Cardiac septum (tissue), 1 donor: ENCODE measurements at regions of chr19 and their contacts with region 1.

Region 1: GRCh38 chr19:49391581-49392399 is 3.7 kb downstream of the KASH5 start:
- DNase-seq: peak; percentile 84

Region 2: GRCh38 chr19:49443366-49444099 is 51.7 kb after region 1 on chr19:
- intact Hi-C with region 1: loop called (anchors 1 kb)
- DNase-seq: peak; percentile 96